Panc1 (cell line): ENCODE measurements at regions of chr4 and their contacts with region 1.

Region 1: GRCh38 chr4:38759113-38759789 is 23.5 kb downstream of the TLR10 start:
- DNase-seq: no peak
- ATAC-seq: peak; percentile 84
- H3K4me3 ChIP-seq: no peak overlapping the region
- H3K27ac ChIP-seq: no peak overlapping the region
- H3K4me1 ChIP-seq: no peaks in the 10 kb centered on the region
- H3K27me3 ChIP-seq: no peaks in the 10 kb centered on the region
- CTCF ChIP-seq: peak; percentile 69

Region 2: GRCh38 chr4:38856524-38857337 is 97.5 kb after region 1 on chr4 and contains the start of gene TLR6:
- CTCF ChIA-PET with region 1: interaction called, 5 read pairs
- POLR2A ChIA-PET with region 1: no interaction called
- in situ Hi-C with region 1: no loop called
- intact Hi-C with region 1: loop called (anchors 2 kb)
- DNase-seq: peak; percentile 83
- ATAC-seq: peak; percentile 45; the same call in 1 of the 2 replicates
- H3K4me3 ChIP-seq: peak within 1 kb of the TSS; percentile 27 to 54
- H3K27ac ChIP-seq: peak within 1 kb of the TSS; percentile 82
- H3K4me1 ChIP-seq: peaks cover 19% of the 10 kb centered on the region
- H3K27me3 ChIP-seq: no peaks in the 10 kb centered on the region
- CTCF ChIP-seq: peak; percentile 71; the same call in 1 of the 2 replicates
- total RNA-seq, gene TLR6: 1.1 TPM

Region 3: DNA sequence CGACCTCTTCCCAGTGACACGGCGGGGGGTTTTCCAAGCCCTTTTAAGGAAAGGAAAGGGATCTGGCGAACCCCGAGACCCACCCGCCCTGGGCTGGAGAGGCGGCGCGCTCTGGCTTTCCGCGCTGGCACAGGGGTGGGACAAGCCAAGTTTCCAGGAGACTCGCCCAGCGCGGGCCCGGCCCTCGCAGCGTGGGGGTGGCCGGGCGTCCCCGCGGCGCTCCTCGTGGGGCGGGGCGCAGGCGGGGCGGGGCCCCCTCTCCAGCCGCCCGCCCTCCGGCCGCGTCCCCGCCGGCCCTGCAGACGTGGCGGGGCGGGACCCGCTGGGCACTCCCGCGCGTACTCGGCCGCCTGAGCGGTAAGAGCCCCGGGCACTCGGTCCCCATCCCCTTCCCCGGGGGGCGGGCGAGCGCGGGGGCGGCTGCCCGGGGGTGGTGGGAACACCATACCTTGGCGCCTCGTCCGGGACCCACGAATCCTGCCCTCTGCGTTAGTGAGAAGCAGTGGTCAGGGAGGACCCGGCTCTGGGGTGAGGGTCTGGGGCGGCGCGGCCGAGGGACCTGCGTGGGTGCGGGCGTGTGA is 108.3 kb after region 1 on chr4 and contains the start of gene FAM114A1:
- CTCF ChIA-PET with region 1: interaction called, 11 read pairs
- POLR2A ChIA-PET with region 1: no interaction called
- in situ Hi-C with region 1: no loop called
- intact Hi-C with region 1: no loop called
- DNase-seq: no peak
- ATAC-seq: peak; percentile 98
- H3K4me3 ChIP-seq: peak within 1 kb of the TSS; percentile 54 to 71
- H3K27ac ChIP-seq: peak within 1 kb of the TSS; percentile 88
- H3K4me1 ChIP-seq: peaks cover 9% of the 10 kb centered on the region
- H3K27me3 ChIP-seq: no peaks in the 10 kb centered on the region
- CTCF ChIP-seq: no peak
- total RNA-seq, gene FAM114A1: 32.0 TPM

Region 4: DNA sequence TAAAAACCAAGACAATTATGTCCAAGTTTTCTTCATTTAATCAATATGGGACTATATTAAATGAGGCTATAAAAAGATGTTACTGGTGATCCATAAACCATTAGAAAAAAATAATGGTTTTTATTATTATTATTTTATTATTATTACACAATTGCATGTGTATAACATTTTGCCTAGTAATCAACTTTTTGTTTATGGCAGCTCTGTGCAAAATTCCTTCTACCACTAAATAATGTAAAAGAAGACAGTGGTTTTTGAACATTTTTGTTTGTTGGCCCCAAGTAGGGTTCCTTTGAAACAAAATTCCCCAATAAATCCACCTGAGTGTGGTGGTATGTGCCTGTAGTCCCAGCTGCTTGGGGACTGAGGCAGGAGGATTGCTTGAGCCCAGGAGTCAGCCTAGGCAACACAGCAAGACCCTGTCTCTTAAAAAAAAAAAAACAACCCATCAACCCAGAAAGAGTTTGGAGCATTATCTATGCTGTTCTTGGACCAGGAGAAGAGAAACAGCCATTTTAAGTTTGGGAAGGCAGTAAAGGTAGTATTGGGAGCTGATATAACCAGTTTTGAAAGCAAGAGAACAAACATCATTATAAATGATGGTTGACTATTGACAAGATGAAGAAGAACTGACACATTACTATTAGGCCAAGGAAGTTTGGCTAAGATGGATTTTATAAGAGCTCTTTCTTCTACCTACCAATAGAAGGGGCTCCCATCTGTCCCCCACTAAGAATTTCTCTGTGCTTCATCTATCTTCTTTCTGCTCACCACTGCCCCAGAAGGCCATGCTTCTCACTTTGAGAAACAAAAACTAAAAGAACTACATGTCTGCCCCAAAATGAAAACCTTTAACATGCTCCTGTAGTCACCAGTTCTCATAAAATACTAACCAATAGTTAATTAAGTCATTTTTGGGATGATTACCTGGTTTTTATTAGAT is 270.8 kb after region 1 on chr4:
- CTCF ChIA-PET with region 1: no interaction called
- POLR2A ChIA-PET with region 1: no interaction called
- in situ Hi-C with region 1: no loop called
- intact Hi-C with region 1: no loop called
- DNase-seq: no peak
- ATAC-seq: no peak
- H3K4me3 ChIP-seq: peak overlapping the region; percentile 47 to 57
- H3K27ac ChIP-seq: peak overlapping the region; percentile 99
- H3K4me1 ChIP-seq: peaks cover 25% of the 10 kb centered on the region
- H3K27me3 ChIP-seq: no peaks in the 10 kb centered on the region
- CTCF ChIP-seq: no peak; the same call in 1 of the 2 replicates

Region 5: GRCh38 chr4:39146211-39146610 is 387.0 kb after region 1 on chr4:
- CTCF ChIA-PET with region 1: no interaction called
- POLR2A ChIA-PET with region 1: no interaction called
- in situ Hi-C with region 1: no loop called
- intact Hi-C with region 1: loop called (anchors 10 kb)
- DNase-seq: no peak
- ATAC-seq: no peak
- H3K4me3 ChIP-seq: no peak overlapping the region
- H3K27ac ChIP-seq: no peak overlapping the region
- H3K4me1 ChIP-seq: no peaks in the 10 kb centered on the region
- H3K27me3 ChIP-seq: no peaks in the 10 kb centered on the region
- CTCF ChIP-seq: no peak

Region 6: GRCh38 chr4:40446839-40447238 is 1687.6 kb after region 1 on chr4:
- CTCF ChIA-PET with region 1: interaction called, 12 read pairs
- POLR2A ChIA-PET with region 1: no interaction called
- in situ Hi-C with region 1: no loop called
- intact Hi-C with region 1: no loop called
- DNase-seq: no peak
- ATAC-seq: no peak
- H3K4me3 ChIP-seq: no peak overlapping the region
- H3K27ac ChIP-seq: no peak overlapping the region
- H3K4me1 ChIP-seq: peaks cover 2% of the 10 kb centered on the region; the same call in 1 of the 2 replicates
- H3K27me3 ChIP-seq: no peaks in the 10 kb centered on the region
- CTCF ChIP-seq: no peak